ENCODE measurements at regions of chr11 and their contacts with region 1.

Region 1: DNA sequence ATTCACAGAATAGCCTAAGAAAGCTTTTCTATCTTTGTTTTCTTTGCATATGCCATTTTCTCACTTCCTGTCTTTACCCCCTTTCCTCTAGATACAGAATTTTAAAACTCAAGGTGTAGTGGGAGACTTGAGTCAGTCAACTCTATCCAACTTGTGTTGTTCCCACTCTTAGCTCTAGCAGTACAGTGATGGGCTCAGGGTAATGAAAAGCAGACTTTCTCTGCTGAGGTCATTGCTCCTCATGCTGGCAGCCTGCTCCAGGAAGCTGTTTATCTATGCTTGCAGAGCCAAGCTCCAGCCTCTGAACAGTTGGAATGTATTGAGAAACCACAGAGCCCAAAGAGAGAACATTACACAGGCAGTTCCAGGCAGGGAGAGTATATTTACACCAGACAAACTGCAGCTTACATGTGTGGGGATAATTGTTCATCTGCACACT is 68.1 kb downstream of the CSTPP1 start:
- DNase-seq: peak; percentile 57 to 81
- ATAC-seq: peak; percentile 98 to 100 (median 98)
- H3K4me3 ChIP-seq: no peak overlapping the region
- H3K27ac ChIP-seq: peak overlapping the region; percentile 21 to 76 (median 57)
- H3K4me1 ChIP-seq: peaks cover 0 to 43% (median 30%) of the 10 kb centered on the region in 9 donors
- H3K27me3 ChIP-seq: no peaks in the 10 kb centered on the region
- CTCF ChIP-seq: peak in 1 of 9 donors; percentile 9

Region 2: GRCh38 chr11:45964911-45965389 is 1039.7 kb before region 1 on chr11:
- intact Hi-C with region 1: no loop called
- DNase-seq: peak; percentile 17 to 67
- ATAC-seq: peak; percentile 63 to 91 (median 85)
- H3K4me3 ChIP-seq: no peak overlapping the region
- H3K27ac ChIP-seq: peak overlapping the region in 2 of 10 donors; percentile 18 to 19
- H3K4me1 ChIP-seq: peaks cover 0 to 26% (median 8%) of the 10 kb centered on the region in 9 donors
- H3K27me3 ChIP-seq: no peaks in the 10 kb centered on the region
- CTCF ChIP-seq: peak; percentile 78 to 96 (median 89)

Region 3: GRCh38 chr11:46597609-46598219 is 406.9 kb before region 1 on chr11:
- intact Hi-C with region 1: no loop called
- DNase-seq: no peak
- ATAC-seq: no peak
- H3K4me3 ChIP-seq: no peak overlapping the region
- H3K27ac ChIP-seq: no peak overlapping the region
- H3K4me1 ChIP-seq: peaks cover under 1 to 35% (median 22%) of the 10 kb centered on the region in 9 donors
- H3K27me3 ChIP-seq: no peaks in the 10 kb centered on the region
- CTCF ChIP-seq: no peak

Region 4: GRCh38 chr11:46786110-46786509 is 218.5 kb before region 1 on chr11:
- intact Hi-C with region 1: no loop called
- DNase-seq: no peak
- ATAC-seq: no peak
- H3K4me3 ChIP-seq: no peak overlapping the region
- H3K27ac ChIP-seq: no peak overlapping the region
- H3K4me1 ChIP-seq: no peaks in the 10 kb centered on the region
- H3K27me3 ChIP-seq: no peaks in the 10 kb centered on the region
- CTCF ChIP-seq: no peak

Region 5: GRCh38 chr11:46936138-46937110 is 68.2 kb before region 1 on chr11 and contains the start of gene CSTPP1:
- intact Hi-C with region 1: loop called in 1 of 10 experiments (anchors 10 kb)
- DNase-seq: peak; percentile 92
- ATAC-seq: peak; percentile 93 to 100 (median 96)
- H3K4me3 ChIP-seq: peak within 1 kb of the TSS; percentile 33 to 73 (median 62)
- H3K27ac ChIP-seq: peak within 1 kb of the TSS in 7 of 10 donors; percentile 38 to 67 (median 54)
- H3K4me1 ChIP-seq: peaks cover 0 to 18% (median 10%) of the 10 kb centered on the region in 9 donors
- H3K27me3 ChIP-seq: peaks cover 0 to 5% (median 0%) of the 10 kb centered on the region in 7 donors
- CTCF ChIP-seq: no peak
- total RNA-seq, gene CSTPP1: 12.7 to 19.4 (median 16.7) TPM

Region 6: GRCh38 chr11:46966773-46967172 is 37.8 kb before region 1 on chr11:
- intact Hi-C with region 1: no loop called
- DNase-seq: no peak
- ATAC-seq: no peak
- H3K4me3 ChIP-seq: no peak overlapping the region
- H3K27ac ChIP-seq: no peak overlapping the region
- H3K4me1 ChIP-seq: peaks cover 0 to 2% (median 0%) of the 10 kb centered on the region in 9 donors
- H3K27me3 ChIP-seq: no peaks in the 10 kb centered on the region
- CTCF ChIP-seq: no peak

Region 7: DNA sequence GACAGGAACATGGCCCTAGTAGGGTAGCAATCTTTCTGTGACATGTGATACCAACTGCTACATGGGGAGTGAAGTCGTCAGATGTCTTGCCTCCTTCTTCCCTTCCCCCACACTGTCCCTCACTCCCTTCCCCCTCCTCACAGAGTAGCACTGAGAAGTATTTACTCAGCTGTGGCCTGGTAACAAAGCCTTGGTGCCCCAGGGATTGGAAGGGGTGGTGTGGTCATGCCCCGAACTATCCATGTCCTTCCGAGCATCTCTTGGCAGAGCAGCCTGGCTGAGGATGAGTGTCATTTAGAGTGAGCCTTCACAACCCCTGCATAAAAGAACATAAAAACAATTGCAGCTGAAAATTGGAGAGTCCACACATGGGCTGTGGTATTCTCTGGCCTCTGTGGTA is 125.9 kb after region 1 on chr11:
- intact Hi-C with region 1: loop called in 1 of 10 experiments (anchors 10 kb)
- DNase-seq: peak in 1 of 2 donors; percentile 11
- ATAC-seq: peak in 1 of 8 donors; percentile 45
- H3K4me3 ChIP-seq: no peak overlapping the region
- H3K27ac ChIP-seq: no peak overlapping the region
- H3K4me1 ChIP-seq: peaks cover 0 to 16% (median 0%) of the 10 kb centered on the region in 9 donors
- H3K27me3 ChIP-seq: no peaks in the 10 kb centered on the region
- CTCF ChIP-seq: no peak

Measured in heart right ventricle (tissue), 16 donors.